Activated naive CD4-positive, alpha-beta T cell treated with anti-CD3 and anti-CD28 coated beads for 36 hours (primary cell): ENCODE measurements at regions of chr5 and their contacts with region 1.

Region 1: GRCh38 chr5:75511435-75512384 is at the starts of genes CERT1 and POLK:
- DNase-seq: peak; percentile 99
- H3K4me3 Mint-ChIP-seq: peak within 1 kb of the TSS; percentile 96
- H3K27ac Mint-ChIP-seq: peak within 1 kb of the TSS; percentile 89
- H3K4me1 Mint-ChIP-seq: peaks cover 53% of the 10 kb centered on the region
- H3K27me3 Mint-ChIP-seq: no peaks in the 10 kb centered on the region
- total RNA-seq, gene CERT1: 17.1 to 18.5 TPM
- total RNA-seq, gene POLK: 26.8 to 29.0 TPM

Region 2: GRCh38 chr5:74865804-74866595 is 645.7 kb before region 1 on chr5 and contains the start of gene FAM169A:
- CTCF ChIA-PET with region 1: no interaction called
- intact Hi-C with region 1: loop called (anchors 5 kb)
- DNase-seq: peak; percentile 43
- H3K4me3 Mint-ChIP-seq: peak within 1 kb of the TSS; percentile 85
- H3K27ac Mint-ChIP-seq: peak within 1 kb of the TSS; percentile 83
- H3K4me1 Mint-ChIP-seq: peaks cover 28% of the 10 kb centered on the region
- H3K27me3 Mint-ChIP-seq: no peaks in the 10 kb centered on the region
- total RNA-seq, gene FAM169A: 9.3 to 10.7 TPM

Region 3: DNA sequence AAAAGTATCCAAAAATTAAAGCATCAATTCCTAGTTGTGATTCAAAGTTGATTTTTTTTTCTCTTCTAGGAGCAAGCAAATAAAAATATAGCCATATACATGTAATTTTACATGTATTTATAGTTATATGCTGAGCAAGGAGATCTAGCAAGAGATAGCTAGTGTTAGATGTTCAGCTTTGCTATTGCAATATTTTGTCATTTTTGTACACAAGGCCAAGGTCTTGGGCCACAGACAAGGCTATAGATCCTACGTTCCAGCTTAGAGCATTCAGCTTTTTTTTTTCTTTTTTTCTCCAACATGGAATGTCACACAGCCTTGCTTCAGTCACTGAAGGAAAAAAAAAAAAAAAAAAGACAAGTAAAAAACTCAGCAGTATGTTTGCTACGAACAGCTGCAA is 137.8 kb before region 1 on chr5:
- CTCF ChIA-PET with region 1: no interaction called
- intact Hi-C with region 1: no loop called
- DNase-seq: no peak
- H3K4me3 Mint-ChIP-seq: no peak overlapping the region
- H3K27ac Mint-ChIP-seq: no peak overlapping the region
- H3K4me1 Mint-ChIP-seq: no peaks in the 10 kb centered on the region
- H3K27me3 Mint-ChIP-seq: no peaks in the 10 kb centered on the region

Region 4: GRCh38 chr5:75389430-75389829 is 122.3 kb before region 1 on chr5:
- CTCF ChIA-PET with region 1: no interaction called
- intact Hi-C with region 1: loop called (anchors 1 kb)
- DNase-seq: peak; percentile 48
- H3K4me3 Mint-ChIP-seq: no peak overlapping the region
- H3K27ac Mint-ChIP-seq: peak overlapping the region; percentile 6
- H3K4me1 Mint-ChIP-seq: peaks cover 11% of the 10 kb centered on the region
- H3K27me3 Mint-ChIP-seq: no peaks in the 10 kb centered on the region

Region 5: DNA sequence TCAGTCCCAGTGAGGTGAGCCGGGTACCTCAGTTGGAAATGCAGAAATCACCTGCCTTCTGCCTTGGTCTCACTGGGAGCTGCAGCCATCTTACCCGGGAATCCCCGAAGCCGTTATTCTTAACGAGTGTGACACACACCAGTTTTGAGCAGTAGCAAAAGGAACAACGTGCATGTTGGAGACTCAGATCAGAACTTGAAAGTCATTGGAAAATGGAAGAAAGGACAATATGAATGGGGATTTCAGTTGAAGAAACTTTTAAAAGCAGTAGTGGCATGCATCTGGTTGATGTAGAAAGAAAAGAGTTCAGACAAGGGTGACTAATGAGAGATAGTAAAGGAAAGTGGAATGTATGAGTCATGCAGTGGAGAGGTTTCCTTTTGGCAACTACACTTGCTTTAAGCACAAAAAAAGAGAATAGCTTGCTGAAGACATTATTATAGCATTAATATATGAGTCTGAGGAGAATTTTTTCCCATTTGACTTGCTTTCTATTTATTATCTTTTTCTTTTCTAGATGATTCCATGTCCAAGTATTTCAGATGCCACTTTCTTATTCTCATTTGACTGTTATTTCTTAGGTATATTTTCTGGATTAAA is 55.1 kb after region 1 on chr5:
- CTCF ChIA-PET with region 1: interaction called, 3 read pairs
- intact Hi-C with region 1: loop called (anchors 1 kb)
- DNase-seq: peak; percentile 84
- H3K4me3 Mint-ChIP-seq: peak overlapping the region; percentile 48
- H3K27ac Mint-ChIP-seq: peak overlapping the region; percentile 95
- H3K4me1 Mint-ChIP-seq: peaks cover 55% of the 10 kb centered on the region
- H3K27me3 Mint-ChIP-seq: no peaks in the 10 kb centered on the region

Region 6: GRCh38 chr5:75681125-75681830 is 169.6 kb after region 1 on chr5:
- CTCF ChIA-PET with region 1: interaction called, 5 read pairs
- intact Hi-C with region 1: loop called (anchors 2 kb)
- DNase-seq: no peak
- H3K4me3 Mint-ChIP-seq: no peak overlapping the region
- H3K27ac Mint-ChIP-seq: no peak overlapping the region
- H3K4me1 Mint-ChIP-seq: peaks cover 12% of the 10 kb centered on the region
- H3K27me3 Mint-ChIP-seq: no peaks in the 10 kb centered on the region

Region 7: DNA sequence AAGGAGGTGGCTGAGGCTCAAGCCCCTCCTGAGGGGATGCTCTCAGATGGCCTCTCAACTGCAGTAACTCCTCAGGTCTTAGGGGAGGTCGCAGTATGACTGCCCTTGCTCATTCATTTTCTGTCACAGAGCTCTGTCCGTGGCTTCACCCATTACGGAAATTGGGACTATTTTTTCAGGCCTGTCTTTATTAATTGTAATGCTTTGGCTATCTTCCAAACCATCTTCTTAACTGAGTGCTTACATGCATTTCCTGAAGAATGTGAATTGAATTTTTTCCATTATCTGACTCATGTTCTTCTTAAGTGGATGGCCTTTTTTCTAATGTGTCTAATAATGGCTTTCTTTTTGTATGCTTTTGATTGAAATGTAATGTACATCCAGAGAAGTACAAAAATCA is 535.0 kb after region 1 on chr5:
- CTCF ChIA-PET with region 1: no interaction called
- intact Hi-C with region 1: no loop called
- DNase-seq: no peak
- H3K4me3 Mint-ChIP-seq: no peak overlapping the region
- H3K27ac Mint-ChIP-seq: no peak overlapping the region
- H3K4me1 Mint-ChIP-seq: no peaks in the 10 kb centered on the region
- H3K27me3 Mint-ChIP-seq: peaks cover 30% of the 10 kb centered on the region